Posterior vena cava (tissue), 2 donors: ENCODE measurements at regions of chr22 and their contacts with region 1.

Region 1: DNA sequence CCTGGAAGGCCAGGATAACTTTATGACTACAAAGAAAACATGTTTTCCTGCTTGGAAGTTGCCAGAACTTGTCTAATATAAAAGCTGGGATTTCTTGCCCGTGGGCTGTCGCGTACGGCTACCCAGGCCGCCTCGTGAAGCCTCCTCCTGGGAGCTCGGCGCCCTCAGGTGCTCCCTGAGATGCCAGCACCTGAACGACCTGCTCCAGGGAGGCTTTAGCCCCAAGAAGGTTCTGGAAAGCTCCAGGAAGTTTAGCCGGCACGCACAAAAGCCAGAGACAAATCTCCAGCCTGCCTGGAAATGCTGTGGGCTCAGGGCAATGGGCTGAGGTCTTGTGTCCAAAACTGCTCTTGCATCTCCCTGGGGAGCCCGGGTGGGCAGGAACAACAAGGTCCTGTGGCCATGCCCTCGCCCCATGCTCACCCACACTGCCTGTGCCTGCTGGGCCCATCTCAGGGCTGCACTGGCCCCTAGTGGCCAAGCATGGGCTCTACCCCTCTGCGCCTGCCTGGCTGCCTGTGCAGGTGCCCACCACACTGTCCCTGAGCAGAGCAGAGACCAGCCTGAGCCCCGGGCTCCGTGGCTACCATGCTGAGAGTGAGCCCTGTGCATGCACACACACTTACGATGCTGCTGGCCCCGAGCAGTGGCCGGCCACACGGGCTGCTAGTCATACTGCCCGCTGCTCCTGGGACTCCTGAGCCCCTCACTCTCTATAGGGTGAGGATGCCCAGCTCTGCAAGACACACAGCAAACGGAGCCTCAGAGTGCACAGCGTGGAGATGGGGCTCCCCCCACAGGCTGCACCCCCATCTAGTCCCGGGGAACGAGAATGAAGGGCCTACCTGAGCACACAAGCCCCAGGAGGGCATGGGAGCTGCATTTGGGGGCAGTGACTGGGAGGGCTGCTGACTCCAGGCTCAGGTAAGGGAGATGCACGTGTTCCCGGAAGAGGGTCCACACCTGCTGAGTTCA is 4.9 kb upstream of the CELSR1 start:
- DNase-seq: peak; percentile 92

Region 2: DNA sequence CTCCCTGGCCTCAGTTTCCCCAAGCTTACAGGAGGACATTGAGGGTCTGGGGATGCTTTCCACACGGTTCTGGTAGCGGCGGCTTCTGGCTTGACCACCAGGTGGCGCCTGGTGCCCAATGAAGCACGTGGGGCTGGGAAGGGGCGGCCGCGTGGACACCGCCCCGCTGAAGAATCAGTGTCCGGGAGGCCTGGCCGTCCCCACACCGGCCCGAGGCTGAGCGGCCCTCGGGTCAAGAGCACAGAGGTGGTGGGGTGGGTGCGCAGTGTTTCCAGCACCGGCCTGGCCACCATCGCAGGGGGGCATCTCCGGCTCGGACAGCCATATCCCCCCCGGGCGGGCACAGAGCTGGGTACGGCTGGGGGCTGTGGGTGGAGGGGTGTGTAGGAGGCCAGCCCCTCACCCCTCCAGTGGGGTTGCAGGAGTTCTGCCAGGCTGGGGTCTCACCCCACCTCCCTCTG is 419.8 kb before region 1 on chr22:
- intact Hi-C with region 1: loop called (anchors 10 kb)
- DNase-seq: peak; percentile 93

Region 3: GRCh38 chr22:46355371-46355995 is 186.8 kb before region 1 on chr22:
- intact Hi-C with region 1: loop called in 1 of 2 experiments (anchors 5 kb)
- DNase-seq: peak; percentile 88

Region 4: GRCh38 chr22:46367707-46368191 is 174.5 kb before region 1 on chr22:
- intact Hi-C with region 1: loop called (anchors 5 kb)
- DNase-seq: no peak

Region 5: DNA sequence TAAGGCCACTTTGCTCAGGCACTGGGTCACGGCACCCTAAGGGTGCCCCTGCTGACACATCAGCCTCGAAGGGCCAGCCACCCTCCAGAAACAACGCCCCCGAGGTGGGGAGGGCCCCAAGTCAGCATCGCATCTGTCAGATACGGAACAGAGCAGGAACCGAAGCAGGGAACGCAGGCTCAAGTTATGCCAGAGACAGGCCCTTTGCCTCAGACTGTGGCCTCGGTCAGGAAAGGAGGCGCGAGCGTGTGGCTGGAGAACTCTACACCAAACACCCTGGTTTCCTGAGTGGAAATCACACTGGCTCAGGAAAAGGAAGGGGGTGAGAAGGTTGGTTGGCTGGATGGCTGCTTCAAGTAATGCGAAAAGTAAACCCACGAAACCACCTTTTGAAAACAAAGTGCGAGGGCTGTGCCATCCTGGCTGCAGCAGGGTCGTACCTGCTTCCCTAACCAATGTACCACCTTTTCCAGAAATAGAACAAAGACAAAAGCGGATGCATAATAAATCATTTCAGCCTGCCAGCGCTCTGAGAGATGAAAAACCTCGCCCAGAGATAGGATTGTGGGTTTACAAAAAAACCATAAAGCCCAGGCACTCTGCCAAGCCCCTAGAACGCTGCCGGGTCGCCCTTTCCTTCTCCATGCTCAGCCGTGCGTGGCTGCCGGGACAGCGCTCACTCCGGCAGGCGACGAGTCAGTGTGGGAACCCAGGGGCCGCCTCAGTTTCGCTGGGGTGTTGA is 168.2 kb before region 1 on chr22:
- intact Hi-C with region 1: loop called (anchors 5 kb)
- DNase-seq: no peak

Region 6: DNA sequence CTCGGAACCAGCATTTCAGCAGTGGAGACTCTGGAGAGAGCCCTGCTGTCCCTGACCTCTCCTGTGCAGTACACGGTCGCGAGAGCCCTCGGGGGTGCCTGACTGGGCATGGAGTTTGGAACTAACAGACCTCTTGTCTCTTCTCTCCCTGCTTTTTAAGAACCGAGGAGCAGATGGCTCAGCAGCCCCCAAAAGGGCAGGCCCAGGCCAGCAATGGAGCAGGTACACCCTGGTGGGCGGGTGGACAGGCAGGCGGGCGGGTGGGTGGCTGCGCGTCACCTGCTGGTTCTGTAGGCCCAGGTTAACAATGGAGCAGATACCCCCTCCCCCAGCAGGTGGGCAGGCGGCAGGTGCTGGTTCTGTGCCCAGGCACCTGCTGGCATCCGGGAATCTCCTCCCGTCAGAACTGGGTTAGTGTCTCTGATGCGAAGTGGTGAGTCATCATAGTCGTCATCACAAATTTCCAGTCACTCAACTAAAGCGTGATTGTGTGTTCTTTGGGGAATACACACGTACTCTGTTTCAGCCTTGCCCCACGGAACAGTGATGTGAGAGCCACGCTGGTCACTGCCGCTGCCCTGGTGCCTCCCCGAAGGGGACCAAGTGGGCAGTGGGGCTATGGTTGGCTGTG is 119.0 kb after region 1 on chr22:
- intact Hi-C with region 1: no loop called
- DNase-seq: no peak

Region 7: GRCh38 chr22:46774253-46774979 is 232.1 kb after region 1 on chr22:
- intact Hi-C with region 1: no loop called
- DNase-seq: no peak